CD14-positive monocyte (primary cell): ENCODE measurements at regions of chrX and their contacts with region 1.

Region 1: GRCh38 chrX:40013266-40014195 is 84.2 kb downstream of the BCOR start:
- DNase-seq: peak; percentile 30 to 39 (median 32)
- H3K4me3 ChIP-seq: peak overlapping the region; percentile 59 to 78 (median 64)
- H3K4me3 Mint-ChIP-seq: peak overlapping the region; percentile 83 to 90
- H3K27ac ChIP-seq: peak overlapping the region in 1 of 2 donors; percentile 48
- H3K27ac Mint-ChIP-seq: peak overlapping the region in 2 of 7 donors; percentile 57 to 61
- H3K4me1 ChIP-seq: peaks cover 49 to 54% of the 10 kb centered on the region in 2 donors
- H3K4me1 Mint-ChIP-seq: peaks cover 39% of the 10 kb centered on the region
- H3K27me3 ChIP-seq: peaks cover 18 to 42% of the 10 kb centered on the region in 2 donors
- H3K27me3 Mint-ChIP-seq: peaks cover 38 to 68% (median 46%) of the 10 kb centered on the region in 3 donors
- CTCF ChIP-seq: no peak

Region 2: GRCh38 chrX:40083120-40083978 is 69.8 kb after region 1 on chrX:
- intact Hi-C with region 1: loop called in 1 of 2 experiments (anchors 10 kb)
- DNase-seq: no peak
- H3K4me3 ChIP-seq: peak overlapping the region; percentile 4 to 70 (median 44)
- H3K4me3 Mint-ChIP-seq: peak overlapping the region; percentile 70 to 72
- H3K27ac ChIP-seq: no peak overlapping the region
- H3K27ac Mint-ChIP-seq: no peak overlapping the region
- H3K4me1 ChIP-seq: peaks cover 22 to 24% of the 10 kb centered on the region in 2 donors
- H3K4me1 Mint-ChIP-seq: peaks cover 33% of the 10 kb centered on the region
- H3K27me3 ChIP-seq: peaks cover 5 to 7% of the 10 kb centered on the region in 2 donors
- H3K27me3 Mint-ChIP-seq: peaks cover 5 to 65% (median 16%) of the 10 kb centered on the region in 3 donors
- CTCF ChIP-seq: no peak

Region 3: DNA sequence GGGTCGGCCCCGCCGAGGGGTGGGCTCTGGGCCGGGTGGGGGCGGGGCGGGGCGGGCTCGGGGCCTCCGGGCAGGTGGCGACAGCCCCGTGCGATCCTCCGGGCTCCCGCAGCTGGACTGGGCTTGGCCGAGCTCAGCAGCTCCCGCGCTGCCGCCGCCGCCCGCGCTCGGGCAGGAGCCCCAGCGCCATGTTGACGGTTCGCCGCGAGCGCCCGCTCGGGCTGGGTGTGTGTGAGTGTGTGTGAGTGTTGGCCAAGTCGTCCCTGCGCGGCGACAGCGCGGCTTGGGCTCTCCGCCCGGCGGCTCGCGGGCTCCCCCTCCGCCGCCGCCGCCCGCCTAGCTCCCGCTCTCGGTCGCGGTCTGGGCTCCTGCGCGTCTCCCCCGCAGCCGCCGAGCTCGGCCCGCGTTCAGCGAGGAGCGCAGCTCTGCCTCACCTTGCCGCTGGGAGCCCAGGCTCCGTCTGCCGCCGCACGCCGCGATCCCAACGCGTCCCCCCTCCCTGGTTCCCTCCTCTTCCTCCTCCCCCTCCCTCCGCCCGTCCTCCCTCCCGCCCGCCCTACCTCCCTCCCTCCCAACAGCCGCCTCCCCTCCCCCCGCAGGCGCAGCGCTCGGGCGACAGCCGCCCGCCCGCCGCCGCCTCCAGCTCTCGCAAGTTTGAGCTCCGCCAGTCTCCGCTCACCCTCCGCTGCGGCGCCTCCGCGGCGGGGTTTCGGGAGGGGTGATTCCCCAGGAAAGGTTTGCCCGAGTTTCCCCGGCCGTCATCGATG is 84.1 kb after region 1 on chrX and contains the start of gene BCOR:
- intact Hi-C with region 1: loop called in 1 of 2 experiments (anchors 5 kb)
- DNase-seq: peak in 2 of 3 donors; percentile 32 to 57
- H3K4me3 ChIP-seq: peak within 1 kb of the TSS; percentile 63 to 77 (median 70)
- H3K4me3 Mint-ChIP-seq: peak within 1 kb of the TSS; percentile 84 to 94
- H3K27ac ChIP-seq: peak within 1 kb of the TSS; percentile 65 to 79
- H3K27ac Mint-ChIP-seq: peak within 1 kb of the TSS in 6 of 7 donors; percentile 20 to 75 (median 58)
- H3K4me1 ChIP-seq: peaks cover 46 to 49% of the 10 kb centered on the region in 2 donors
- H3K4me1 Mint-ChIP-seq: peaks cover 40% of the 10 kb centered on the region
- H3K27me3 ChIP-seq: peaks cover 2 to 17% of the 10 kb centered on the region in 2 donors
- H3K27me3 Mint-ChIP-seq: peaks cover 1 to 70% (median 14%) of the 10 kb centered on the region in 3 donors
- CTCF ChIP-seq: no peak
- polyA plus RNA-seq, gene BCOR: 1.1 to 8.2 (median 2.6) TPM

Region 4: DNA sequence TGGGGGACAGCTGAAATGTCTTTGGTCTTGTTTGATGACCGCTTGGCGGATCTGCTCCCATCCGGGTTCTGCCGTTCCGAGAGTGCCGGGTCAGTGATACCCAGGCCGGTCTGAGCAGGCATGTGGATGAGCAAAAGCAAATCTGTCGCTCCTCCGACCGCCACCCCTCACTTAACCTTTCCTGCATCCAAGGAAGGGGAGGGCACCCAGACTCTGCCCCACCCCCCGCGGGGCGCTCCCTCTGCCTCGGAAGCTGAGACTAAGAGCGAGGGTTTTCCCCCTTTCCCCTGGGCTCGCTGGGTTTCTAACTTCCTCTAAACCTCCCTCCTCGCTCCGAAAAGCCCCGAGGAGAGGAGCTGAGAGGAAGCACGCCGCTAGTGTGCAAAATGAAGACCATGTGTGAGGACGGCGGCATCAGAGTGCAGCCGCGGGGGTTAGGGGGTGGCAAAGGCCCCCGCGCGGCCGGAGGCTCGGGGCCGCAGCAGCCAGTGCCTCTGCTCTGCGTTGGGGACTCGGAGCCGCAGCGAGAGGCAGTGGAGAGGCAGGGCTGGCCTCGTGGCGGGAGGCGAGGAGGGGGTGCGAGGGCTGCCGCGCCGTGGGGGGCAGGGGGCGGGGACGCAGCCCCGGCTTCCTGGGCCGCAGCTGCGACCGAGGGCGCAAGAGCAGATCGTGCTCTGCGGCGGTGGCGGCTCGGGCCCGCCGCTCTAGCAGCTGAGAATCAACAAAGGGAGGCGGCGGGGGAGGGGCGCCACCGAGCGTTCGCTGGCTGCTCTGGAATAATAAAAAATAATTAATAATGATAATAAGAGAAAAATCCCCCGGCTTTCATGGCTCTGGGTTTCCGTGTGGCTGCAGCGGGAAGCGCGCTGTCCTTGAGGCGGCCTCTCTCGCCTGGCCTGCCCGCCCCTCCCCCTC is 140.1 kb after region 1 on chrX:
- intact Hi-C with region 1: loop called in 1 of 2 experiments (anchors 5 kb)
- DNase-seq: peak; percentile 69 to 81 (median 72)
- H3K4me3 ChIP-seq: peak overlapping the region; percentile 15 to 77 (median 49)
- H3K4me3 Mint-ChIP-seq: peak overlapping the region; percentile 78 to 83
- H3K27ac ChIP-seq: peak overlapping the region; percentile 17 to 50
- H3K27ac Mint-ChIP-seq: peak overlapping the region in 6 of 7 donors; percentile 42 to 82 (median 70)
- H3K4me1 ChIP-seq: peaks cover 70 to 95% of the 10 kb centered on the region in 2 donors
- H3K4me1 Mint-ChIP-seq: peaks cover 48% of the 10 kb centered on the region
- H3K27me3 ChIP-seq: peaks cover 0 to 10% of the 10 kb centered on the region in 2 donors
- H3K27me3 Mint-ChIP-seq: peaks cover 0 to 75% (median 6%) of the 10 kb centered on the region in 3 donors
- CTCF ChIP-seq: no peak